ENCODE measurements at regions of chr11 and their contacts with region 1.

Region 1: GRCh38 chr11:34881900-34882299 is 34.3 kb downstream of the APIP start:
- DNase-seq: no peak
- H3K4me3 ChIP-seq: no peak overlapping the region
- H3K27ac ChIP-seq: no peak overlapping the region
- H3K27me3 ChIP-seq: no peaks in the 10 kb centered on the region
- CTCF ChIP-seq: no peak

Region 2: DNA sequence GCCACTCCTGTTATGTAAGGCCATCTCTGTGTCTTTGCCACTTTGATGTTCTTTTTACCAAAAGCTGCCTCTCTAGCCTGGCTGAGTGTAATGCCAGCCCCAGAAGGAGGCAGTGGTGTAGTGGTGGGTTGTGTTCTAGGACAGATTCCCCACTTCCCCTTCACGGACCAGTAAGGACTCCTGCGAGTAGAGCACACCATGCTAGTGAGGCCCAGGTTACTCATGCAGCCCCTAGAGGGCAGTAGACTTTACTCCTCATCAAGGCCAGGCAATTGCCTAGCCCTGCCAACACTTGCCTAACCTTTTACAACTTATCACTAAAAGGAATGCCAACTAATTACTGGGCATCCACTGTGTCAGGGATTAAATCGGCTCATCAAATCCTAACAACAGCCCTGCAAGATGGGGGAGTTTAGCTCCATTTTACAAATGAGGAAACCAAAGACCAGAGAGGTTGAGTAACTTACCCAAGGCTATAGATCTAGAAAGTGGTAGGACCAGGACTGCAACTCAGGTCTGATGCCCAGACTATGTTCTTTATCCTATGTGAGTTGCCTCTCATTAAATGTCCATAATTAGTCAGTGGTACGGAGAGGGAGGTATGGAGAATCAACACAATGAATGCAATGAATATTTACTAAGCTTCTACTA is 41.0 kb before region 1 on chr11:
- intact Hi-C with region 1: loop called in 1 of 2 experiments (anchors 5 kb)
- DNase-seq: no peak
- H3K4me3 ChIP-seq: no peak overlapping the region
- H3K27ac ChIP-seq: no peak overlapping the region
- H3K27me3 ChIP-seq: no peaks in the 10 kb centered on the region
- CTCF ChIP-seq: peak in 31 of 56 donors; percentile 9 to 40 (median 23)

Region 3: DNA sequence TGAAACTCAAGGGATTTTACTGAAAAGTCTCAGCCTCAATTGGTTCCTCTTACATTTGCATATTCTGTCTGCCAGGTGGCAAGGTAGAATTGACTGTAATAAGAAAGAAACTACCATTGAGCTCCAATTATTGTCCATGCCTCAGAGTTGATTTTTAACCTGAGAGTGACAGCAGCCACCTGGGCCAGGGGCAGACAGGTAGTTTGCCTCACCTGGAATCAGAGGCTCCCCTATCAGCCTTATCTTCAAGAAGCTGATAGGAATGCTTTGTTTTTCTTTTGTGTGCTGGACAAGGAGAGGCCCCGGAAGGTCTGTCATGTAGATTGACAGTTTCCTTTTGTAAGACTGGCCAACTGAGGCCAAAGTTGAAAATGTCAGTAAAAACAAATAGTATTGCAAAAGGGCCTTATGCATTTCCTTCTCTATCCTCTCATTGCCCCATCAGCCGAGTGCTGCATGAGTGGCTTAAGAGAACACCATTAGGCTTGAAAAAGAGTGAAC is 291.2 kb after region 1 on chr11:
- intact Hi-C with region 1: no loop called
- DNase-seq: no peak
- H3K4me3 ChIP-seq: no peak overlapping the region
- H3K27ac ChIP-seq: no peak overlapping the region
- H3K27me3 ChIP-seq: no peaks in the 10 kb centered on the region
- CTCF ChIP-seq: no peak